Activated B cell treated with CpG ODN at 0.5 μM for 24 hours (primary cell): ENCODE measurements at regions of chr14 and their contacts with region 1.

Region 1: GRCh38 chr14:105709281-105710118 is 183.1 kb downstream of the TMEM121 start:
- DNase-seq: no peak
- ATAC-seq: no peak
- H3K4me3 Mint-ChIP-seq: peak overlapping the region; percentile 75
- H3K27ac Mint-ChIP-seq: peak overlapping the region; percentile 85
- H3K4me1 Mint-ChIP-seq: peaks cover 48% of the 10 kb centered on the region
- H3K27me3 Mint-ChIP-seq: no peaks in the 10 kb centered on the region
- CTCF ChIP-seq: no peak

Region 2: DNA sequence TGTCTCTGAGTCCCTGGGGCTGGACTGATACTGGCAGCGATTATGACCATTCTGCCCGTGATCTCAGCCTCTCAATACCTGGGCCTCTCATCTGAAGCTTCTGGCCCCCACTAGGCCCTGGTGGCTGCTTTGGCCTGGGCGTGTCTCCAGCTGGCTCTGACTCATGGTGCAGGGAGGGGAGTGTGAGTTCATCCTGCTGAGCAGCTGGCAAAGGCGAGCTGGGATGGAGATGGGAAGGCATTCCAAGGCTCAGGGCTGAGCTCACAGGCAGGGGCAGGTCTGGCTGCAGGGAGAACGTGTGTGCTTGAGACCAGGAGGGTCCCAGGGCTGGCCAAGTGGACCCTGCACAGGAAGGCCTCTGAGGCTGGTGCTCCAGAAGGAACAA is 38.7 kb after region 1 on chr14:
- CTCF ChIA-PET with region 1: no interaction called
- POLR2A ChIA-PET with region 1: interaction called, 14 read pairs
- intact Hi-C with region 1: no loop called
- DNase-seq: no peak
- ATAC-seq: peak; percentile 70
- H3K4me3 Mint-ChIP-seq: peak overlapping the region; percentile 95
- H3K27ac Mint-ChIP-seq: peak overlapping the region; percentile 93
- H3K4me1 Mint-ChIP-seq: peaks cover 38% of the 10 kb centered on the region
- H3K27me3 Mint-ChIP-seq: no peaks in the 10 kb centered on the region
- CTCF ChIP-seq: no peak

Region 3: DNA sequence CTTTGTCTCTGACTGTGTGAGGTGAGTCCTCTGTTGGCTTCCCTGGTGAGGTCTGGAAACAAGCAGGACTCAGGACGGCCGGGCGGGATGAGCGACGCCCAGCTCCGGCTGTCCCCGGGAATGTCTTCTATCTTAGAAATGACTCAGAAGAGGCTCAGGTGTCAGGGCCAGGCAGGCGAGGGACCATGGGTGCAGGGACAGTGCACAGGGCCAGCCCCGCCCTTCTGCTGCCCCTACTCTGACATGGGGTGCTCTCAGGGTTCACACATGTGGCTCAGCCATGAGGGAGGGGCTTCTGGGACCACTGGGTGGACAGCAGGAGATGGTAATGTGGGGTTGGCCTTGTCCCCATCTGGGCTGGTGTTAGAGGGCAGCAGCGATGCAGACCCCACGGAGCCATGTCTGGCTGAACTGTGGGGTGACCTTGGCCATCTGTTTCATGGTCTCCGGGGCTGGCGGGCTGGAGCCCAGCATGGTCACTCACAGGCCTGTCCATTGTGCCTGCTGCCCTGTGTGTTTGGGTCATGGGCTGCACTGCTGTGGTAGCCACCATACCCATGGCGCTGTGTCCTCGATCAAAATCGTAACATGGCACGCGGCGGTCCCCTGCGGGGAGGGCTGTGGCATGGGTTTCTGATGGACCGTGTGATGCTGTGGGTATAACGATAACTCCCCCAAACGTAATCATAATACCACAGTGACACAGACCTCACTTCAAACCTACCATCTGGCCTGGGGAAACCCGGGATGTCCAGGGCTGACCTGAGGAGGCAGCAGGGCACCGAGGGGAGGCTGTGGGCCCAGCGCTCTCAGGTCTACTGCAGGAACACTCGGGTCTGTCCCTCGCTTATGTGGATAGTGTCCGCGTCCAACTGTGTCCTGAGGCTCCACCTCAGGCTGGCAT is 185.7 kb after region 1 on chr14:
- CTCF ChIA-PET with region 1: no interaction called
- POLR2A ChIA-PET with region 1: no interaction called
- intact Hi-C with region 1: no loop called
- DNase-seq: peak; percentile 1
- ATAC-seq: no peak
- H3K4me3 Mint-ChIP-seq: peak overlapping the region; percentile 50
- H3K27ac Mint-ChIP-seq: peak overlapping the region; percentile 30
- H3K4me1 Mint-ChIP-seq: peaks cover 22% of the 10 kb centered on the region
- H3K27me3 Mint-ChIP-seq: no peaks in the 10 kb centered on the region
- CTCF ChIP-seq: no peak